IMR-90 (cell line): ENCODE measurements at regions of chr2 and their contacts with region 1.

Region 1: DNA sequence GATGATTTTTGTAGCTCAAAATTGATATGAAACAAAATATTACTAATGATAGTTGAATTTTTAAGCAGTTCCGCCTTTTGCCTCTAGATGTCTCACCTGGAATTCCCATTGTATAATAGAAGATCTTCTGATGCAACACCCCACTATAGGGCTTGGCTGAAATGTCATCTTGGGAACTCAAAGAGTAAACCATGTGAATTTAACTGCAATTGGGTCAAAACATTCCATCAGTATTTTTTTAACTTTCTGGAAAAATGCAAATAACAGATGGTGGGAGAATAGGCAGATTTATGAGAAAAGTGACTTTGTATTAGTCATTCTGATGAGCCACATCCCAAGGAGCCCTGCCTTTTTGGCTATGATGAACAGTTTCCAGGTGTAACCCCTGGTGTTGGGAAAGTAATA is 489.9 kb downstream of the NYAP2 start:
- DNase-seq: peak; percentile 94
- ATAC-seq: peak; percentile 81
- H3K4me3 ChIP-seq: no peak overlapping the region
- H3K27ac ChIP-seq: peak overlapping the region; percentile 40; the same call in 1 of the 2 replicates
- H3K4me1 ChIP-seq: peaks cover 6% of the 10 kb centered on the region
- H3K27me3 ChIP-seq: no peaks in the 10 kb centered on the region
- CTCF ChIP-seq: peak; percentile 85
- POLR2A ChIP-seq: no peak
- RAD21 ChIP-seq: peak; percentile 82

Region 2: GRCh38 chr2:226011716-226012450 is 122.4 kb after region 1 on chr2:
- CTCF ChIA-PET with region 1: no interaction called
- POLR2A ChIA-PET with region 1: no interaction called
- dilution Hi-C with region 1: no loop called
- in situ Hi-C with region 1: no loop called
- intact Hi-C with region 1: no loop called
- DNase-seq: no peak
- ATAC-seq: no peak
- H3K4me3 ChIP-seq: no peak overlapping the region
- H3K27ac ChIP-seq: no peak overlapping the region
- H3K4me1 ChIP-seq: no peaks in the 10 kb centered on the region
- H3K27me3 ChIP-seq: no peaks in the 10 kb centered on the region
- CTCF ChIP-seq: no peak
- POLR2A ChIP-seq: no peak
- RAD21 ChIP-seq: no peak

Region 3: GRCh38 chr2:226030788-226031646 is 141.6 kb after region 1 on chr2:
- CTCF ChIA-PET with region 1: no interaction called
- POLR2A ChIA-PET with region 1: no interaction called
- dilution Hi-C with region 1: no loop called
- in situ Hi-C with region 1: no loop called
- intact Hi-C with region 1: loop called (anchors 5 kb)
- DNase-seq: peak; percentile 69
- ATAC-seq: peak; percentile 92
- H3K4me3 ChIP-seq: peak overlapping the region; percentile 52
- H3K27ac ChIP-seq: peak overlapping the region; percentile 89
- H3K4me1 ChIP-seq: peaks cover 6% of the 10 kb centered on the region
- H3K27me3 ChIP-seq: no peaks in the 10 kb centered on the region
- CTCF ChIP-seq: no peak
- POLR2A ChIP-seq: no peak
- RAD21 ChIP-seq: peak; percentile 33

Region 4: GRCh38 chr2:226118471-226119430 is 229.3 kb after region 1 on chr2:
- CTCF ChIA-PET with region 1: no interaction called
- POLR2A ChIA-PET with region 1: interaction called, 3 read pairs
- dilution Hi-C with region 1: no loop called
- in situ Hi-C with region 1: no loop called
- intact Hi-C with region 1: loop called (anchors 1 kb)
- DNase-seq: peak; percentile 91
- ATAC-seq: peak; percentile 42
- H3K4me3 ChIP-seq: peak overlapping the region; percentile 6; the same call in 1 of the 2 replicates
- H3K27ac ChIP-seq: peak overlapping the region; percentile 92
- H3K4me1 ChIP-seq: peaks cover 8% of the 10 kb centered on the region
- H3K27me3 ChIP-seq: no peaks in the 10 kb centered on the region
- CTCF ChIP-seq: no peak
- POLR2A ChIP-seq: no peak
- RAD21 ChIP-seq: no peak; the same call in 1 of the 2 replicates

Region 5: DNA sequence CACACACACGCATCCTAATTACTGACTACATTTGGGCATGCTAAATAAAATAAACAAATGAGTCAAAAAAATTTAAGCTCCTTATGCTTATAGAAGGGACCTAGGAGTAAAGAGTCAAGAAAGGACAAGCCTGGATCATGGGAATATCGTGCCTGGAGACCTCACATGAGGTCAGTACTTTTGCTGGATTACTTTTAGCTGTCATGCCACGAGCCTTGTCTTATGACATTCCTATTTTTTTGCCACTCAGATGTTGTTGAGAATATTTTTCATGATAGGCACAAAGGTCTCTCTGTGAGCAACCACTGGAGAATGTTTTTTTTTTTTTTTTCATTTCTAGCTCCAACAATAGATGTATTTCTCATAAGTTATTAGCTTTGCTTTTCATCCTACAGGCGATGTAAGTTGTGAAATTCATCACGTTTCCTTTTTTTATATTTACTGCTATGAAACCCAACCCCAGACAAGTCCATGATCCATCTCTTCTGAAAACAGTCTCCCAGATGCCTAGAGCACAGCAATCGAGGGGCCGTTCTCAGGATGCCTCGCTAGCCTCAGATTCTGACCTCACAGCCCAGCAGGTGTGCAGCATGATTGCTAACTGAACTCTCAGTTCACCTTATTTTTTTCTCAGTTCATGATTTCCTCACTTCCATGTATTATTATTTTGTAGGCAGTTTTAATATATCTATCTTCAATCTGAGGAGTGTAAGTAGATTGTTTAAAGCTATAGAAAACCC is 445.7 kb after region 1 on chr2:
- CTCF ChIA-PET with region 1: no interaction called
- POLR2A ChIA-PET with region 1: no interaction called
- dilution Hi-C with region 1: no loop called
- in situ Hi-C with region 1: no loop called
- intact Hi-C with region 1: loop called (anchors 10 kb)
- DNase-seq: peak; percentile 81
- ATAC-seq: peak; percentile 74
- H3K4me3 ChIP-seq: no peak overlapping the region
- H3K27ac ChIP-seq: peak overlapping the region; percentile 51; the same call in 1 of the 2 replicates
- H3K4me1 ChIP-seq: peaks cover 2% of the 10 kb centered on the region
- H3K27me3 ChIP-seq: no peaks in the 10 kb centered on the region
- CTCF ChIP-seq: no peak
- POLR2A ChIP-seq: no peak
- RAD21 ChIP-seq: no peak

Region 6: DNA sequence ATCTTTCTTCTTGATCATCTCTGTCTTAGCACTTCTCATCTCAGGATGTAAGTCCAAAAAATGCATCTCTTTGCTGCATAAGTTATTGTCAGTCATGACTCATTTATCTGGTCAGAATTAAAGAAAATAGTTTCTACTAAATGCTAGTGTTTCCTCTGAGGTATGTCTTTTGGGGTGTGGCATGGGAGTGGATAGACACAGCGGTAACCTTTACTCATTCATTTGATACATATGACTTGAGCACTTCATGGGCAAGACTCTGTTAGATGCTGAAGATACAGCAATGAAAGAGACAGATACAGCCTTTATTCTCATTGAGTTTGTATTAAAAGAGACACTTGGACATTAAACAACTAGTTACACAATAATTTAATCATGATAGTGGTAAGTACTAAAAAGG is 625.5 kb after region 1 on chr2:
- CTCF ChIA-PET with region 1: no interaction called
- POLR2A ChIA-PET with region 1: no interaction called
- dilution Hi-C with region 1: no loop called
- in situ Hi-C with region 1: no loop called
- intact Hi-C with region 1: loop called (anchors 10 kb)
- DNase-seq: peak; percentile 40
- ATAC-seq: peak; percentile 52
- H3K4me3 ChIP-seq: no peak overlapping the region
- H3K27ac ChIP-seq: peak overlapping the region; percentile 24; the same call in 1 of the 2 replicates
- H3K4me1 ChIP-seq: peaks cover 4% of the 10 kb centered on the region
- H3K27me3 ChIP-seq: no peaks in the 10 kb centered on the region
- CTCF ChIP-seq: no peak
- POLR2A ChIP-seq: no peak
- RAD21 ChIP-seq: no peak

Region 7: DNA sequence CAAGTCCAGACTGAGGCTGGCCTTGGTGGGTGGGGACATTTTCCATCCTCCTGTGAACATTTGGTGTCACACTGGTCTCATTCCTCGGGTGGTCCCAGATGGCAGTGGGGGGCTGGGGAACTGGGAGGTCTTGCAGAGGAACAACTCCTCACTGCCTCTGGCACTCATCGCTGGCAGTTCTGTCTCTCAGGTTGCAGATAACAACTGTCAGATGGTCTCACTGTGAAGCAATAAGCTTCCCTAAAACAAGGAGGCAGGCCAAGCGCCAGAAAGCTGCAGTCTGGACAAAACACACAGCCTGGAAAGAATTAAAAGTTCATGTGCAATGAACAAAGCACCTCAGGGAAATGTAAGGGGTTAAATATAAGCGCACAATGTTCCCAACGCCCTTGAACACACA is 832.1 kb after region 1 on chr2:
- CTCF ChIA-PET with region 1: no interaction called
- POLR2A ChIA-PET with region 1: no interaction called
- dilution Hi-C with region 1: no loop called
- in situ Hi-C with region 1: no loop called
- intact Hi-C with region 1: loop called (anchors 5 kb)
- DNase-seq: peak; percentile 36
- ATAC-seq: 0 out of 2 replicates have a peak, but pooled peaks have one; percentile 19
- H3K4me3 ChIP-seq: no peak overlapping the region
- H3K27ac ChIP-seq: no peak overlapping the region
- H3K4me1 ChIP-seq: peaks cover 12% of the 10 kb centered on the region
- H3K27me3 ChIP-seq: no peaks in the 10 kb centered on the region
- CTCF ChIP-seq: no peak
- POLR2A ChIP-seq: no peak
- RAD21 ChIP-seq: no peak

Region 8: GRCh38 chr2:226984750-226985582 is 1095.5 kb after region 1 on chr2:
- CTCF ChIA-PET with region 1: interaction called, 3 read pairs
- POLR2A ChIA-PET with region 1: no interaction called
- dilution Hi-C with region 1: no loop called
- in situ Hi-C with region 1: no loop called
- intact Hi-C with region 1: loop called (anchors 5 kb)
- DNase-seq: peak; percentile 83
- ATAC-seq: peak; percentile 92
- H3K4me3 ChIP-seq: no peak overlapping the region
- H3K27ac ChIP-seq: no peak overlapping the region
- H3K4me1 ChIP-seq: 0 out of 2 replicates have a peak, but pooled peaks cover 4% of the 10 kb centered on the region
- H3K27me3 ChIP-seq: no peaks in the 10 kb centered on the region
- CTCF ChIP-seq: peak; percentile 86
- POLR2A ChIP-seq: 0 out of 2 replicates have a peak, but pooled peaks have one; percentile 24
- RAD21 ChIP-seq: peak; percentile 92